Activated naive CD4-positive, alpha-beta T cell treated with anti-CD3 and anti-CD28 coated beads, Interleukin-2, amount 10 ng/mL, durations not matched to agents 7 days and 5 days (primary cell): ENCODE measurements at regions of chr13 and their contacts with region 1.

Region 1: GRCh38 chr13:108155185-108156106 is 59.9 kb downstream of the LIG4 start:
- DNase-seq: peak; percentile 67
- H3K4me3 Mint-ChIP-seq: no peak overlapping the region
- H3K27ac Mint-ChIP-seq: no peak overlapping the region
- H3K4me1 Mint-ChIP-seq: no peaks in the 10 kb centered on the region
- H3K27me3 Mint-ChIP-seq: no peaks in the 10 kb centered on the region

Region 2: GRCh38 chr13:108168929-108169328 is 13.5 kb after region 1 on chr13:
- CTCF ChIA-PET with region 1: interaction called, 10 read pairs
- DNase-seq: no peak
- H3K4me3 Mint-ChIP-seq: no peak overlapping the region
- H3K27ac Mint-ChIP-seq: no peak overlapping the region
- H3K4me1 Mint-ChIP-seq: no peaks in the 10 kb centered on the region
- H3K27me3 Mint-ChIP-seq: peaks cover 6% of the 10 kb centered on the region

Region 3: GRCh38 chr13:108302279-108302678 is 146.8 kb after region 1 on chr13:
- CTCF ChIA-PET with region 1: no interaction called
- DNase-seq: no peak
- H3K4me3 Mint-ChIP-seq: no peak overlapping the region
- H3K27ac Mint-ChIP-seq: no peak overlapping the region
- H3K4me1 Mint-ChIP-seq: peaks cover 17% of the 10 kb centered on the region
- H3K27me3 Mint-ChIP-seq: no peaks in the 10 kb centered on the region